Heart left ventricle (tissue), 16 donors: ENCODE measurements at regions of chr1 and their contacts with region 1.

Region 1: GRCh38 chr1:63773815-63774616 is at the start of gene ROR1:
- DNase-seq: peak; percentile 89 to 93 (median 91)
- ATAC-seq: peak; percentile 92 to 97 (median 96)
- H3K4me3 ChIP-seq: peak within 1 kb of the TSS; percentile 60 to 94 (median 73)
- H3K27ac ChIP-seq: peak within 1 kb of the TSS; percentile 75 to 99 (median 94)
- H3K4me1 ChIP-seq: peaks cover 0 to 37% (median 11%) of the 10 kb centered on the region in 12 donors
- H3K27me3 ChIP-seq: peaks cover 0 to 46% (median 0%) of the 10 kb centered on the region in 9 donors
- CTCF ChIP-seq: peak; percentile 29 to 80 (median 64)
- POLR2A ChIP-seq: peak in 1 of 2 donors; percentile 75
- total RNA-seq, gene ROR1: 13.4 to 35.3 (median 19.6) TPM

Region 2: GRCh38 chr1:63698001-63698838 is 75.8 kb before region 1 on chr1:
- intact Hi-C with region 1: loop called in 7 of 10 experiments (anchors 2 to 10 kb)
- DNase-seq: peak; percentile 69 to 90 (median 77)
- ATAC-seq: peak; percentile 87 to 93 (median 91)
- H3K4me3 ChIP-seq: no peak overlapping the region
- H3K27ac ChIP-seq: peak overlapping the region; percentile 67 to 99 (median 92)
- H3K4me1 ChIP-seq: peaks cover 0 to 38% (median 8%) of the 10 kb centered on the region in 12 donors
- H3K27me3 ChIP-seq: no peaks in the 10 kb centered on the region
- CTCF ChIP-seq: no peak
- POLR2A ChIP-seq: peak in 1 of 2 donors; percentile 51

Region 3: GRCh38 chr1:63868268-63868781 is 94.3 kb after region 1 on chr1:
- intact Hi-C with region 1: loop called in 2 of 10 experiments (anchors 5 to 10 kb)
- DNase-seq: no peak
- ATAC-seq: peak in 3 of 4 donors; percentile 35 to 61 (median 51)
- H3K4me3 ChIP-seq: no peak overlapping the region
- H3K27ac ChIP-seq: peak overlapping the region in 2 of 12 donors; percentile 18 to 63
- H3K4me1 ChIP-seq: peaks cover 0 to 53% (median 14%) of the 10 kb centered on the region in 12 donors
- H3K27me3 ChIP-seq: no peaks in the 10 kb centered on the region
- CTCF ChIP-seq: peak in 2 of 12 donors; percentile 24 to 31
- POLR2A ChIP-seq: no peak

Region 4: DNA sequence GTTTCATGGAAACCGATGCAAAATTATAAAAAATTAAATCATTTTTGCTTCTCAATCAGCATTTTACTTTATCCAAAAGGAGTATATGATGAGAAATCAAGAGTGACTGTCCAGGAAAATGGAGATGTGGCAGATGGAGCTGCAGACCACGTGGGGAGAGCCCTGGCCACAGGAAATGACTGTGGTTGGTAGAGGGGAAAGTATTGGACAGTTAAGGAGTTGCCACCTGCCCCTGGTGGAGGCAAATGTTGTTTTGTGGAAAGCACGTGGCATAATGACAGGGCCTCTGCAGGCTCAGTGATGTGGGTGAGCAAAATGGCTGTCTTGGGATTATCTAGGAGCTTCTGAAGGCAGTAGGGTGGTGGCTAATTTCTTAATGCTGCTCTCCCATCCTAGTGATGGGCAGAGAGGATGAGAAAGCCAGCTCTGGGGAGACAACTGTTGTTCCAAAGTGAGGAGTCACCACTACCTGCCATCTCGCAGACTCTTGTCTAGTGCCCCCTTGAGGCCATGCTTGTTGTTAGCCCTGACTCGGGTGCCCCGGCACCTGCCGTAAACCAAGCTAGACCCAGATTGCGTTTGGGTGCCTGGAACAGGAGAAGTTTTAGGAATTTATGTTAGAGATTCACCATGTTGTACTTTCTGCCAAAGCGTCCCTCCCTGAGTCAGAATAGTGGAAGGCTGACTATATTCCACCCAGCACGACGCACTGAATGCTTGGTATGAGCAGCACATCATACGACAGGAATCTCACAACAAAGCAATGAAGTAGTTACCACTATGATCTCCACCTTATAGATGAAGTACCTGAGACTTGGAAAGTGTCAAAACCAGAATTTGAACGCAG is 143.8 kb after region 1 on chr1:
- intact Hi-C with region 1: loop called in 5 of 10 experiments (anchors 5 to 10 kb)
- DNase-seq: no peak
- ATAC-seq: no peak
- H3K4me3 ChIP-seq: no peak overlapping the region
- H3K27ac ChIP-seq: no peak overlapping the region
- H3K4me1 ChIP-seq: peaks cover 0 to 72% (median 19%) of the 10 kb centered on the region in 12 donors
- H3K27me3 ChIP-seq: no peaks in the 10 kb centered on the region
- CTCF ChIP-seq: peak in 3 of 12 donors; percentile 17 to 25 (median 18)
- POLR2A ChIP-seq: no peak

Region 5: GRCh38 chr1:64136752-64137411 is 362.9 kb after region 1 on chr1:
- intact Hi-C with region 1: loop called (anchors 2 to 10 kb)
- DNase-seq: peak in 4 of 5 donors; percentile 64 to 77 (median 66)
- ATAC-seq: peak; percentile 53 to 87 (median 83)
- H3K4me3 ChIP-seq: no peak overlapping the region
- H3K27ac ChIP-seq: peak overlapping the region in 6 of 12 donors; percentile 4 to 55 (median 28)
- H3K4me1 ChIP-seq: peaks cover 0 to 24% (median 4%) of the 10 kb centered on the region in 12 donors
- H3K27me3 ChIP-seq: no peaks in the 10 kb centered on the region
- CTCF ChIP-seq: peak; percentile 77 to 94 (median 87)
- POLR2A ChIP-seq: no peak